Gastrocnemius medialis (tissue), 4 donors: ENCODE measurements at regions of chr3 and their contacts with region 1.

Region 1: DNA sequence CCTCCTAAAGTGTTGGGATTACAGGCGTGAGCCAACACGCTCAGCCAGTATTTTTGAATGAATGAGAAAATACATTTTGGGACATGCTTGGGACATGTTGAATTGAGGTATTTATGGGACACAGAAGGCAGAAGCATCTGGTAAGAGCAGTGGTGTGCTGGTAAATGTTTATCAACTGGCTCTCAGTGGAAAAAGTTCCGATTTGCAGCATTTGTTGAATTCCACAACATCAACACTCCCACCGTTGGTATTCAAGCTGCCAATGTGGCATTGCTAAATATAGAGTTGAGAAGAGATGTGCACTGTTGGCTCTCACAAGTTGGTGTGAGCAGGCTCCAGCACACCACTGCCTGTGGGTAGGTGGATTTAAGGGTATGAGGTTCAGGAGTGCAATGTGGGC is 35.8 kb upstream of the LRRFIP2 start:
- DNase-seq: no peak
- ATAC-seq: no peak
- H3K4me3 ChIP-seq: no peak overlapping the region
- H3K27ac ChIP-seq: no peak overlapping the region
- H3K4me1 ChIP-seq: peaks cover 0 to 3% of the 10 kb centered on the region in 2 donors
- H3K27me3 ChIP-seq: no peaks in the 10 kb centered on the region
- CTCF ChIP-seq: no peak
- POLR2A ChIP-seq: no peak

Region 2: DNA sequence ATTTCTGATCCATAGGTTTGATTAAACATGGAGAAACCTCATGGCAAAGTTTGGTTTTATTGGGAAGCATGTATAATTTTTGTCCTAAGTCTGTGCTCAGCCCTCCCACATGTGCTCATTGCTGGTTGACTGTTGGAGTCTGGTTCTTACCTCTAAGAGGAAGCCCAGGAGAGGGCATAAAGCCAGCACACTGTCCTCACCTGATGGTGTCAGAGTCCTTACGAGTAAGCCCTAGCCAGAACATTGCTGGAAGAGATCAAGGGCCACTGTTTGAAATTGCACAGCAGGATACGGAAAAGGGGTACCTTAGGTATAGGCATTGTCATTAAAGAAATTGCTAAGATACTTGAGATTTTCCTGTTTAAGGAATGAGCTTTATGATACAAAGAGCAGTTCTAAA is 195.6 kb before region 1 on chr3:
- in situ Hi-C with region 1: loop called in 2 of 4 experiments (anchors 10 to 25 kb)
- intact Hi-C with region 1: no loop called
- DNase-seq: no peak
- ATAC-seq: no peak
- H3K4me3 ChIP-seq: no peak overlapping the region
- H3K27ac ChIP-seq: no peak overlapping the region
- H3K4me1 ChIP-seq: no peaks in the 10 kb centered on the region
- H3K27me3 ChIP-seq: no peaks in the 10 kb centered on the region
- CTCF ChIP-seq: no peak
- POLR2A ChIP-seq: no peak

Region 3: DNA sequence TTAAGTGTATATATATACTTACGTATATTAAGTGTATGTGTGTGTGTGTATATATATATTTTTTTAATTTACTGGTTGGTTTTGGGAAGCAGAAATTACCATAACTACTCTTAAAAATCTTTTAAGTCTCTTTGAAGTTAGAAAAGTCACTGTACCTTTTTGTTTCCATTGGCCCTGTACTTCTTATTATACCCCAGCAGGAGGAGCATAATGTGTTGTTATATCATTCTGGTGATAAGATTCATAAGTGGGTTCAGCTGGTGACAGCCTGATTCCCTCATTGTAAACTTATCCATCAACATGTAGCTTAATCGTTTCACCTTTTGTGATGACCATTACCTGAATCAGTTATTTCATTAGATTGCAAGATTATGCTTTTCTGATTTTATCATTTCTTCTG is 186.1 kb before region 1 on chr3:
- in situ Hi-C with region 1: loop called in 1 of 4 experiments (anchors 25 kb)
- intact Hi-C with region 1: loop called (anchors 2 kb)
- DNase-seq: no peak
- ATAC-seq: no peak
- H3K4me3 ChIP-seq: no peak overlapping the region
- H3K27ac ChIP-seq: no peak overlapping the region
- H3K4me1 ChIP-seq: peaks cover 9 to 13% of the 10 kb centered on the region in 2 donors
- H3K27me3 ChIP-seq: no peaks in the 10 kb centered on the region
- CTCF ChIP-seq: peak in 3 of 5 experiments; percentile 27 to 39 (median 29)
- POLR2A ChIP-seq: no peak